AG04449 (cell line): ENCODE measurements at regions of chr2 and their contacts with region 1.

Region 1: DNA sequence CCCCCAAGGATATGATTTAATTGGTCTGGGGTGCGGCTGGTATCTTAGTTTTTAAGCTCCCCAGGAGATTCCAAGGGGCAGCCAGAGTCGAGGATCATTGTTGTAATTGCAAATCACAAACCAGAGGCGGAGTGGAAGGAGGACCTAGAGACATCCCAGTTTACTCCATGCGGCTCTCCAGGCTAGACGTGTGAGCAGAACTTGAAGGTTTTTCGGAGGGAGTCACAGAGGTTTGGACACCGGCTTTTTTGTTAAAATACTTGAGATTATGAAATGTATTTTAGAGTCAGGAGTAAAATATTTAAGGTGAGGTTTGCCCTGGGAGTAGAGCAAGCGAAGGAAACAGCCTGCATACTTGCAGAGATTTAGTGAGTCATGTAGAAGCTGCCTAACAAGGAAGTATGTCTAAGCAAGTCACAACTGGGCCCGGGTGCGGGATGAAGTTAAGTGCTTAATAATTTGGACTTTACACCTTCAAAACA is 39.5 kb downstream of the TGOLN2 start:
- DNase-seq: peak; percentile 50
- H3K4me3 ChIP-seq: no peak overlapping the region
- CTCF ChIP-seq: no peak

Region 2: GRCh38 chr2:84970868-84971509 is 317.3 kb before region 1 on chr2 and contains the start of gene KCMF1:
- CTCF ChIA-PET with region 1: no interaction called
- POLR2A ChIA-PET with region 1: no interaction called
- DNase-seq: no peak
- H3K4me3 ChIP-seq: peak within 1 kb of the TSS; percentile 73
- CTCF ChIP-seq: no peak

Region 3: DNA sequence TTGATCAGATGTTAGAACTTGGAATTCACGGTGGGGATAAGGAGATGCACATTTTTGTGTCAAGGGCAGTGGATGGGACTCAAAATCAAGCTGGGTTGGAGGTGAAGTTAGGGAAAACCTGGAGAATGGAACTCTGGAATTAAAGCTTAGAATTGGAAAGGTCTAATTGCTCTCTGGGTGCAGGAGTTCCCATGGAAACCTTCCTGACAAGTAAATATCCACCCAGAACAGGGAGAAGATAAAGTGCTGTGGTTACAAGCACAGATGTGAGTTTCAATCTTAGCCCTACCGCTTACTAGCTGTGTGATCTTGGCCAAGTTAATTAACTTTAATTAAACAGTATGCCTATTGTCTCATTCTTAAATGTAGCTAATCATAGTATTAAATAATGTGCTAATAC is 226.4 kb before region 1 on chr2:
- CTCF ChIA-PET with region 1: interaction called, 188 read pairs
- POLR2A ChIA-PET with region 1: no interaction called
- DNase-seq: no peak
- H3K4me3 ChIP-seq: no peak overlapping the region
- CTCF ChIP-seq: no peak

Region 4: GRCh38 chr2:85076618-85077274 is 211.5 kb before region 1 on chr2:
- CTCF ChIA-PET with region 1: interaction called, 13 read pairs
- POLR2A ChIA-PET with region 1: no interaction called
- DNase-seq: no peak
- H3K4me3 ChIP-seq: no peak overlapping the region
- CTCF ChIP-seq: no peak

Region 5: DNA sequence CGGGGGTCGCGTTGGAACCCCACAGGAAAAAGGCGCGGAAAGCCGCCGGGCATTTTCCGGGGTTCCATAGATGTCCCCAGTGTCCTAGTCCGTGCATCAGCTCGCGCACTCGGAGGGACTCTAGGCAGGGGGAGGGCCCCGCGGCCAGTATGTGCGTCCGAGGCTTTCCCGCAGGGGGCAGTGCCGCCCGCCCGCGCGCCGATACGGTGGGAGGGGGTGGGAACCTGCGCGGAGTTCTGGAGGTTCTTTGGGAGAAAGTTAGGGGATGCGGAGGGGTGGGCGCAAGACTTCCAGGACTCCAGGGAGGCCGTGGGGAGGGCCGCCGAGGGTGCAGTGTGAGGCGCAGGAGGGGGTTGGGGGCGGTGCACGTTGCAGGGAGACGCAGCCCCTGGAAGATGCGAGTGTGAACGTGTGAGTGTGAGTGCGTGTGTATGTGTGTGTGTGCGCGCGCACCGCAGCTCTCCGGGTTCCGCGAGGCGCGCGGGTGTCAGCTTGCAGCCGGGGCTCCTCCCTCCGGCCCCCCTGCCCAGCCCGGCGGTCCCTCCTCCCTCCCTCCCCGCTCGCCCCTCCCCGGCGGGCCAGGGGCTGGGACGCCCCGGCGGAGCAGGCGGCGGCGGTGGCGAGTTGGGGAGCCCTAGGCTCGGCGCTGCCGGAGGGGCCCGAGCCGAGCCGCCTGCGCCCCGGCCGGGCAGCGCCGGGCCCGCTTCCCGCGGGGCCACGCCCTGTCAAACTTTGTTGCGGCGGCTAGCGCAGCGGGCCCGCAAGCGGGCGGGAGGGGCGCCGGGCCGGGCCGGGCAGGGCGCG is 155.2 kb before region 1 on chr2 and contains the start of gene TCF7L1:
- CTCF ChIA-PET with region 1: interaction called, 146 read pairs
- POLR2A ChIA-PET with region 1: interaction called, 4 read pairs
- DNase-seq: no peak
- H3K4me3 ChIP-seq: peak within 1 kb of the TSS; percentile 86
- CTCF ChIP-seq: peak; percentile 98

Region 6: GRCh38 chr2:85246348-85246747 is 41.9 kb before region 1 on chr2:
- CTCF ChIA-PET with region 1: interaction called, 14 read pairs
- POLR2A ChIA-PET with region 1: no interaction called
- DNase-seq: no peak
- H3K4me3 ChIP-seq: no peak overlapping the region
- CTCF ChIP-seq: no peak